ENCODE measurements at regions of chr5 and their contacts with region 1.

Region 1: DNA sequence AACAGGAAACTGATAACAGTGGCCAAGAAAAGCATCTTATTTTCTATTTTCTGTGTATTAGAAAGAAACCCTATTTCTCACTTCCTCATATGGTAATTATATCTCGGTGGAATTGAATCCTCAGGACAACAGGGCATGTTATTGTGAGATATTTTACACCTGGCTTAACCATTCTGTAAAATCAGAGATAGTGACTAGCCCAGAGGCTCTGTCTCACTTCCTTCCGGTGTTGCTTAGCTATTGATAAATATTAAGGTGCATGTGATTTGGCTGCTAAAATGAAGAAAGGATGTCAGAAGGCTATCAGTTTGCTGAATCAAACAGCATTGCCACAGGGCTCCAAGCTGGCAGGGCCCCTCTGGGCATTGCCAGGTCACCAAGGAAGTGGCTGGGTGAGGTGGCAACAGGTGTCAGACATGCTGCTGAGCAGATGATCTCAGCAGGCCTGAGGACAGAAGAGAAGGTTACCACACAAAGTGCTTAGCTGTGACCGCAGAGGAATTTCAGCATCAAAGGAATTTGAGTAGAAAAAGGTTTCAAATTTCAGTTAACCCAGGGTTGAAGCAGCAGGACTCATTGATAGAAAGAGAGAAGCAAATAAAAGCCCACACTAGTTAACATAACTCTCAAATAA is 330.7 kb downstream of the PDE4D start:
- DNase-seq: peak; percentile 79 to 92
- ATAC-seq: peak; percentile 89 to 93 (median 90)
- H3K4me3 ChIP-seq: no peak overlapping the region
- H3K27ac ChIP-seq: peak overlapping the region; percentile 86
- H3K4me1 ChIP-seq: peaks cover 45% of the 10 kb centered on the region
- H3K27me3 ChIP-seq: no peaks in the 10 kb centered on the region
- CTCF ChIP-seq: no peak

Region 2: DNA sequence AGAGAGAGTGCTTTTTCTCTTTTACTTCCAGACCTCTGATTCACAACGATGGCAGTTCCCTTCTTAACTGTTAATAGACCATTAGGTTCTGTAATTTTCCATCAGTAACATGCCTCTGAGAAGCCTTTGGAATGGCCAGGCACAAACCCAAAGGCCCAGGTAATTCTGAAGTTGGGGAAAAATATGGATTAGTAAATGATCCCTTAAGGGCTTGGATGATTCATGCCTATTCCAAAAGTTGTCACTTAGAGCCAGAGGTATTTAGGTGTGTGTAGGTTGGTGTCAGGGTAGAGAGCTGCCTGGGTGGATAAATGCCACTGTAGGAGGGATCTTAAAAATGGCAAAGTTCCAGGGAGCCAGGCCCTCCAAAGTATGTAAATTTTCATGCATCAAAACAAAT is 1331.8 kb before region 1 on chr5:
- intact Hi-C with region 1: loop called in 1 of 2 experiments (anchors 5 kb)
- DNase-seq: no peak
- ATAC-seq: no peak
- H3K4me3 ChIP-seq: no peak overlapping the region
- H3K27ac ChIP-seq: no peak overlapping the region
- H3K4me1 ChIP-seq: peaks cover 17% of the 10 kb centered on the region
- H3K27me3 ChIP-seq: no peaks in the 10 kb centered on the region
- CTCF ChIP-seq: no peak